ENCODE measurements at regions of chr5 and their contacts with region 1.

Region 1: GRCh38 chr5:139560752-139561654 is at the start of gene UBE2D2:
- DNase-seq: peak; percentile 96 to 99 (median 96)
- ATAC-seq: peak; percentile 91
- H3K4me3 ChIP-seq: peak within 1 kb of the TSS; percentile 99
- H3K27ac ChIP-seq: peak within 1 kb of the TSS; percentile 91
- H3K4me1 ChIP-seq: peaks cover 19 to 25% of the 10 kb centered on the region in 2 experiments; a peak in 4 of 5 replicates
- H3K27me3 ChIP-seq: no peaks in the 10 kb centered on the region
- CTCF ChIP-seq: 0 out of 6 replicates have a peak, but pooled peaks of 1 of the 3 experiments have one; percentile 17
- EP300 ChIP-seq: peak; percentile 33
- POLR2A ChIP-seq: peak; percentile 90
- RAD21 ChIP-seq: no peak
- polyA plus RNA-seq, gene UBE2D2: 53.6 to 58.8 TPM

Region 2: DNA sequence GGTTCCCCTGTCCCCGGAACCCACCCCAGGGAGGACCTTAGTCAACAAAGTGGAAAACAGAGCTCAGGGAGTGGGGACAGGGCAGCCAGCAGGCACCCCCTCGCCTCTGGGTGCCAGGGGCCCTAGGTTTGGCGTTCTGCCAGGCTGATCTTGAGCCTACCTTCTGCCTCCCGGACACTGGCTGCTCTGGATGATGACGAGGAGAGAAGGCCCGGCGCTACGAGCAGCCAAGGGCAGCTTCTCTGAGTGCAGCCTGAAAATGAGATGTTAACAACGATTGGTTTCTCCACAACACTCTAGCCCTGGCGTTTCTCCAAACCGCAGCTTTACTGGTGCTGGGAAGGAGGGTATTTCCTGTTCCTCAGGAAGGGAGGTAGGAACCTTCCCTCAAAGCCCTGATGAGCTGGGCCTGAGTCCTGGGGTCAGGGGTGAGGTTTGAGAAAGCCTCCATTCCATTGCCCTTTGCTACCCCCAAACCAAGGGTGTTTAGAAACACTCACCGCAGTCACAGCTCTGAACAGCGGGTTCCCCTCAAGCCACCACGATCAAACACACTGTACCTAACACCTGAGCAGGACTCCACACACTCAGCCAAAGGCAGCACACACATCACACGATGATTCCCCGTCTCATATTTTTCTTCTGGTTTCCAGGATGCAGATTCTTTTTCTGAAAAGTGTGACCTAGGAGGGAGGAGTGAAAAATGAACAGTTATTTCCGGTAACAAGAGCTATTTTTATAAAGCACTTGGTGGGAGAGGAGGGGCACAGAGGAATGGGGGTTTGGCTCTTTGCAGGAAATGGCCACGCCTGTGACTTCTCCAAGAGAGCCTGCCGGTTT is 78.7 kb before region 1 on chr5 and contains the start of gene STING1:
- CTCF ChIA-PET with region 1: no interaction called
- POLR2A ChIA-PET with region 1: interaction called, 3 read pairs
- in situ Hi-C with region 1: no loop called
- intact Hi-C with region 1: loop called (anchors 1 kb)
- DNase-seq: peak; percentile 75 to 96 (median 82)
- ATAC-seq: peak; percentile 79
- H3K4me3 ChIP-seq: peak within 1 kb of the TSS; percentile 58
- H3K27ac ChIP-seq: peak within 1 kb of the TSS; percentile 98
- H3K4me1 ChIP-seq: peaks cover 52 to 53% of the 10 kb centered on the region in 2 experiments
- H3K27me3 ChIP-seq: no peaks in the 10 kb centered on the region
- CTCF ChIP-seq: 0 out of 6 replicates have a peak, but pooled peaks of 1 of the 3 experiments have one; percentile 3
- EP300 ChIP-seq: peak; percentile 46; the same call in 1 of the 2 replicates
- POLR2A ChIP-seq: peak; percentile 76
- RAD21 ChIP-seq: peak in 1 of 2 experiments; percentile 32; a peak in 1 of 4 replicates
- polyA plus RNA-seq, gene STING1: 20.8 to 23.3 TPM

Region 3: DNA sequence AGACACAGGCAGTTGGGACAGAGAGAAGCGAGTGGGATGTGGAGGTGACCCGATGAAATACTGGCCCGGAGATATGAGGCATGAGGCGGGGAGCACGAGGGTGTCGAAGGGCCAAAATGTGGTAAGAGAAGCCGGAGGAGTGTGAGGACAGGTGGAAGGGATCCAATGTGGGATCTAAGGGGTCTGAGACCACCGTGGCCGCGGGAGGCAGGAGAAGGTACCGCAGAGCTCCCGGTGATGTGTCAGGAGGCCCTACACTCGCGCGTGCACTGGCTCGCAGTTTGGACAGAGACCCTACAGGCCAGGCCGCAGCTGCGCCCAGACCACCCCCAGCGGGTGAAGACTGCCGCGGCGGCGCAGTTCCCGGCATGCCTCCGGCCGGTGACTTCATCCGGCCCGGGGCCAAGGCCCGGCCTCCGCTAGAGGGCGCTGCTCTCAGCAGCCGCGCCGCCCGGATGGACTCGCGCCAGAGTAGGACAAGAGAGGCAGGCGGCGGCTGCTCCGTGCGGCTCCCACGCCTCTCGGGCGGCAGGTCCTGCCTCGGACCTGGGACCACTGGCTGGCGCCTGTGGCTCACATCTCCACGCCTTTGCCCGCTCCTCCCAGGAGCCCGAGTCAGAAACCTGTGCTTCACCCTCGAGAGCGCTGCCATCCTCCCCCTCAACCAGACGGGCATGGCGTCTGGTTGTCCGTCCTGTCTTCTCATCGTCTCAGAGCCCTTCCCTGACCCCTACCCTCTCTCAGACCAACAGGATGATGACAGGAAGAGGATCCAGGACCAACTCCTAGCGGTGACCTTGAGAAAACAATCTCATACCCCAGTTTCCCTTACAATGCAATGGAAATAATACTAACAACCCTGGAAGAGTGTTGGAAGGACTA is 43.1 kb before region 1 on chr5:
- CTCF ChIA-PET with region 1: no interaction called
- POLR2A ChIA-PET with region 1: interaction called, 5 read pairs
- in situ Hi-C with region 1: no loop called
- intact Hi-C with region 1: loop called (anchors 2 kb)
- DNase-seq: peak; percentile 95 to 96 (median 96)
- ATAC-seq: peak; percentile 95
- H3K4me3 ChIP-seq: peak overlapping the region; percentile 44
- H3K27ac ChIP-seq: peak overlapping the region; percentile 90
- H3K4me1 ChIP-seq: peaks cover 14 to 17% of the 10 kb centered on the region in 2 experiments
- H3K27me3 ChIP-seq: no peaks in the 10 kb centered on the region
- CTCF ChIP-seq: peak; percentile 94 to 96 (median 95)
- EP300 ChIP-seq: peak; percentile 60; the same call in 1 of the 2 replicates
- POLR2A ChIP-seq: peak; percentile 89
- RAD21 ChIP-seq: peak; percentile 62 to 67

Region 4: GRCh38 chr5:139574641-139575312 is 13.8 kb after region 1 on chr5:
- CTCF ChIA-PET with region 1: no interaction called
- POLR2A ChIA-PET with region 1: interaction called, 19 read pairs
- in situ Hi-C with region 1: no loop called
- intact Hi-C with region 1: no loop called
- DNase-seq: peak; percentile 30 to 62 (median 32)
- ATAC-seq: peak; percentile 82
- H3K4me3 ChIP-seq: no peak overlapping the region
- H3K27ac ChIP-seq: no peak overlapping the region
- H3K4me1 ChIP-seq: peaks cover 2% of the 10 kb centered on the region in 2 experiments; a peak in 3 of 5 replicates
- H3K27me3 ChIP-seq: no peaks in the 10 kb centered on the region
- CTCF ChIP-seq: peak; percentile 61 to 74 (median 64); a peak in 5 of 6 replicates
- EP300 ChIP-seq: no peak
- POLR2A ChIP-seq: no peak
- RAD21 ChIP-seq: peak; percentile 30 to 58; a peak in 3 of 4 replicates

Region 5: DNA sequence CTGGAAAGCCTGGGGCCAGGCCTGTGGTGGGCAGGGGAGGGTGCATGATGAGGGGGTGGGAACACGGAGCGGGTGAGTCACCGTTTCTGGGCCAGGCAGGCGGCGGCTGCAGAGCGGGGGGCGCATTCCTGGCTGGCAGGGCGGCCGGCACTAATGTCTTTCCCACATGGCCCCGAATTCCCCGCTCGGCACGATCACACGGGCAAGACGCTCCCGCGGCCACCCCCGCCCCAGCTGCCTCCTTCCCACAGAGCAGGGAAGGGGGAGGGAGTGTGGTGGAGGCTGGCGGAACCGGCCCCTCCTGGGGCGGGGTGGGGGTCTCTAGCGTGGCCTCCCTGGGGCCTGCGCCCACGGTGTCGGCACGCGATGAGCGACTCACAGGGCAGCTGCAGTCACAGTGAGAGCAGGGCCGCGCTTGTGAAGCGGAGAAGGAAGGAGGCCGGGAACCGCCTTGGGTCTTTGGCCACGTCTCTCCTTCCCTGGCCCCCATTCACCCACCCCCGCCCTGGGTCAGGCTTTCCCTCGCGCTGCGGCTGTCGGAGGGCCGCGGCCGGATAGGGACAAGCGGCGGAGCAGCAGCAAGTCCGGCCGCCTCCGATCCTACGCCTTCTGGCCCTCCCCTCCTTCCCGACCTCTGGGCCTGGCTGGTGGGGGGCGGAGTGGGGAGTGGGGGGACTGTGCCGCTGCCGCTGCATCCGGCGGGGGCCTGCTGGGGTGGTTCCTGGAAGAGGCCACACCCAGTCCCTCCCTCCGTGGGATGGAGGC is 136.1 kb after region 1 on chr5:
- CTCF ChIA-PET with region 1: no interaction called
- POLR2A ChIA-PET with region 1: no interaction called
- in situ Hi-C with region 1: no loop called
- intact Hi-C with region 1: loop called (anchors 10 kb)
- DNase-seq: peak; percentile 92 to 94 (median 92)
- ATAC-seq: peak; percentile 85
- H3K4me3 ChIP-seq: peak overlapping the region; percentile 55
- H3K27ac ChIP-seq: peak overlapping the region; percentile 97
- H3K4me1 ChIP-seq: peaks cover 58 to 66% of the 10 kb centered on the region in 2 experiments
- H3K27me3 ChIP-seq: no peaks in the 10 kb centered on the region
- CTCF ChIP-seq: no peak
- EP300 ChIP-seq: peak; percentile 39
- POLR2A ChIP-seq: peak; percentile 87
- RAD21 ChIP-seq: no peak

Region 6: GRCh38 chr5:140734354-140734753 is 1173.4 kb after region 1 on chr5:
- CTCF ChIA-PET with region 1: no interaction called
- POLR2A ChIA-PET with region 1: no interaction called
- in situ Hi-C with region 1: no loop called
- intact Hi-C with region 1: no loop called
- DNase-seq: peak; percentile 59 to 72 (median 64)
- ATAC-seq: peak; percentile 99
- H3K4me3 ChIP-seq: no peak overlapping the region
- H3K27ac ChIP-seq: no peak overlapping the region
- H3K4me1 ChIP-seq: no peaks in the 10 kb centered on the region
- H3K27me3 ChIP-seq: no peaks in the 10 kb centered on the region
- CTCF ChIP-seq: peak; percentile 73 to 84 (median 75)
- EP300 ChIP-seq: no peak
- POLR2A ChIP-seq: no peak
- RAD21 ChIP-seq: peak; percentile 56 to 84

Measured in K562 (cell line).